HepG2 (cell line): ENCODE measurements at regions of chr11 and their contacts with region 1.

Region 1: GRCh38 chr11:126310228-126310991 is 6.5 kb downstream of the DCPS start:
- DNase-seq: peak; percentile 63
- ATAC-seq: peak; percentile 98
- H3K4me3 ChIP-seq: no peak overlapping the region
- H3K27ac ChIP-seq: no peak overlapping the region
- H3K4me1 ChIP-seq: no peaks in the 10 kb centered on the region
- H3K27me3 ChIP-seq: no peaks in the 10 kb centered on the region
- CTCF ChIP-seq: peak; percentile 95
- EP300 ChIP-seq: no peak
- POLR2A ChIP-seq: no peak
- RAD21 ChIP-seq: peak; percentile 92

Region 2: GRCh38 chr11:126355324-126355925 is 45.0 kb after region 1 on chr11 and contains the start of gene ST3GAL4:
- CTCF ChIA-PET with region 1: interaction called, 3 read pairs
- POLR2A ChIA-PET with region 1: interaction called, 4 read pairs
- in situ Hi-C with region 1: no loop called
- intact Hi-C with region 1: loop called (anchors 2 kb)
- DNase-seq: peak; percentile 68
- ATAC-seq: peak; percentile 69
- H3K4me3 ChIP-seq: peak within 1 kb of the TSS; percentile 86 to 97 (median 86)
- H3K27ac ChIP-seq: peak within 1 kb of the TSS; percentile 77
- H3K4me1 ChIP-seq: peaks cover 43% of the 10 kb centered on the region
- H3K27me3 ChIP-seq: no peaks in the 10 kb centered on the region; a peak in 1 of 5 replicates
- CTCF ChIP-seq: no peak
- EP300 ChIP-seq: no peak
- POLR2A ChIP-seq: peak in 1 of 2 experiments; percentile 64; a peak in 2 of 4 replicates
- RAD21 ChIP-seq: no peak
- total RNA-seq, gene ST3GAL4: 7.4 and 13.3 TPM in 2 replicates

Region 3: DNA sequence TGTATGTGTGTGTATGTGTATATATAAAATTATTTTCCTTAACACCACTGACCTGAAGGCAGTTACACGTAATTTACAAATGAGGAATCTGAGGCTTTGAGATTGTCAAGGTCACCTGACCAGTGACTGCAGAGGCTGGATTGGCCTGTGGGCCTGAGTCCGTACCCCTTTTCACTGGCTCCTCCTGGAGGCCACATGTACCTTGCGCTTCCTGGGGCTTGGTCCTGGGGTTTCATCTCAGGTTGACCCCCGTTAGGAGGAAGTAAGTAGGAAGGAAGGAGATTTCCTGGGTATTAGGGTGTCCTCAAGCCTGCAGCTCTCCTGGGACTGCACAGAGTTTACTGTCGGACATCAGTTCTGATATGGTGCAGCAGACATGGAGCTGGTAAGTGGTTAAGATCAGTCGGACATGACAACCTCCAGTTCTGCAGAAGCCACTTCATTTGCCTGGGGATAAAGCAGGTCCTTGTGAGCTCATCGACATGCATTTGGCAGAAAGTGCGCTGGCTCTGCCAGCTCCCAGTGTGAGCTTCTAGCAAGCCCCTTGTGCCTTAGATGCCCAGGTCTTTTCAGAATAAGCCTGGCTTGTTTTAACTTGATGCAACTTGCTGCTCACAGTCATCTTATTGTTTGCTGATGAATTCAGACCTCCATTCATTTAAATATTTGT is 81.7 kb after region 1 on chr11:
- CTCF ChIA-PET with region 1: interaction called, 8 read pairs
- POLR2A ChIA-PET with region 1: no interaction called
- in situ Hi-C with region 1: no loop called
- intact Hi-C with region 1: loop called (anchors 1 kb)
- DNase-seq: peak; percentile 15
- ATAC-seq: peak; percentile 83
- H3K4me3 ChIP-seq: no peak overlapping the region
- H3K27ac ChIP-seq: no peak overlapping the region
- H3K4me1 ChIP-seq: no peaks in the 10 kb centered on the region
- H3K27me3 ChIP-seq: no peaks in the 10 kb centered on the region
- CTCF ChIP-seq: peak; percentile 47
- EP300 ChIP-seq: no peak
- POLR2A ChIP-seq: no peak
- RAD21 ChIP-seq: no peak

Region 4: DNA sequence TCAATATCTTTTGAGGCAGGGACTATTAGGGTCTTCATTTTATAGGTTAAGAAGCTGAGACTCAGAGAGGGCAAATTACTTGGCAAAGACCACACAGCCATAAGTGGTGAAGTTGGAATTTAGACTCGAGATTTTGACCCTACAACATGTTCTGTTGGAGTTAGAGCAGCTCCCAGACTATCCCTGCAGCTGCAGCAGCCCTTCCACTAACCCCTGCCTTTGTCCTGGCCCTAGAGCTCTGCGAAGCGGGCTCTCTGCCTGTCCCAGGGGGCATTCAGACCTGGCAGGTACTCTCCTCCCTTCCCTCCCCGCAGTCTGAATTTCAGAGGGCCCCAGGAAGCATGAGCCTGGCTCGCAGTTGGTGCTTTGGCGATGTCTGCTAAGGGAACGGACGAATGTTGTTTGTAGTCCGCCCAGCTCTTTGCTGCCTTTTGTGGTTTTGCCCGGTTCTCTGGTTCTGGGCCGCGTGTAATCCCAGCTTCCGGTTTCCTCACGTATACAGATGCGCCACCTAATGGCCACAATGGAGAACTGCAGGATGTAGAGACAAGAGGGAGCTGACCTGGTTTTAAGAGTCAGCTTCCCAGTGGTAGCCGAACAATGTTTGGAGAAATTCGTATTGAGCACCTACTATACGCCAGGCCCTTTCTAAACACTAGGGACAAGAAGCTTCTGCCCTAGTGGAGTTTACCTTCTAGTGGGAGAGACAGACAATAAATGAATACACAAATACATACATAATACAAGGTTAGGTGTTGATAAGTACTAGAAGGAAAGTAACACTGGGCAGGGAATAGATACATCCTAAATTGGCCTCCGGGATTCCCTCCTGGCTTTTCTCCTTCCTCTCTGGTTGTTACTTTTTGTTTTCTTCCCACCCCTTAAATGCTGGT is 170.2 kb after region 1 on chr11:
- CTCF ChIA-PET with region 1: interaction called, 13 read pairs
- POLR2A ChIA-PET with region 1: interaction called, 3 read pairs
- in situ Hi-C with region 1: loop called (anchors 10 kb)
- intact Hi-C with region 1: loop called (anchors 1 kb)
- DNase-seq: peak; percentile 74
- ATAC-seq: peak; percentile 82
- H3K4me3 ChIP-seq: peak overlapping the region in 2 of 3 experiments; percentile 27 to 53; a peak in 2 of 6 replicates
- H3K27ac ChIP-seq: no peak overlapping the region
- H3K4me1 ChIP-seq: peaks cover 8% of the 10 kb centered on the region
- H3K27me3 ChIP-seq: peaks cover 4 to 44% of the 10 kb centered on the region in 2 experiments; a peak in 4 of 5 replicates
- CTCF ChIP-seq: peak; percentile 90
- EP300 ChIP-seq: no peak
- POLR2A ChIP-seq: no peak
- RAD21 ChIP-seq: peak; percentile 58